ENCODE measurements at regions of chr1 and their contacts with region 1.

Region 1: GRCh38 chr1:193406901-193407300 is 220.5 kb upstream of the B3GALT2 start:
- DNase-seq: peak in 6 of 9 donors; percentile 30 to 54 (median 48)
- ATAC-seq: peak; percentile 70
- H3K4me3 ChIP-seq: no peak overlapping the region
- H3K4me3 Mint-ChIP-seq: peak overlapping the region in 3 of 10 donors; percentile 3 to 11 (median 5)
- H3K27ac ChIP-seq: no peak overlapping the region
- H3K27ac Mint-ChIP-seq: peak overlapping the region in 5 of 9 donors; percentile 0 to 68 (median 10)
- H3K4me1 ChIP-seq: peaks cover 4 to 11% of the 10 kb centered on the region in 2 donors
- H3K4me1 Mint-ChIP-seq: peaks cover 11 to 34% (median 24%) of the 10 kb centered on the region in 7 donors
- H3K27me3 ChIP-seq: no peaks in the 10 kb centered on the region
- H3K27me3 Mint-ChIP-seq: no peaks in the 10 kb centered on the region

Region 2: GRCh38 chr1:193183019-193183627 is 223.8 kb before region 1 on chr1:
- CTCF ChIA-PET with region 1: interaction called, 3 read pairs
- POLR2A ChIA-PET with region 1: no interaction called
- intact Hi-C with region 1: loop called (anchors 5 kb)
- DNase-seq: peak in 7 of 9 donors; percentile 21 to 62 (median 56)
- ATAC-seq: peak; percentile 85
- H3K4me3 ChIP-seq: no peak overlapping the region
- H3K4me3 Mint-ChIP-seq: no peak overlapping the region
- H3K27ac ChIP-seq: no peak overlapping the region
- H3K27ac Mint-ChIP-seq: no peak overlapping the region
- H3K4me1 ChIP-seq: peaks cover 0 to 8% of the 10 kb centered on the region in 2 donors
- H3K4me1 Mint-ChIP-seq: peaks cover 24 to 77% (median 58%) of the 10 kb centered on the region in 7 donors
- H3K27me3 ChIP-seq: no peaks in the 10 kb centered on the region
- H3K27me3 Mint-ChIP-seq: no peaks in the 10 kb centered on the region

Region 3: DNA sequence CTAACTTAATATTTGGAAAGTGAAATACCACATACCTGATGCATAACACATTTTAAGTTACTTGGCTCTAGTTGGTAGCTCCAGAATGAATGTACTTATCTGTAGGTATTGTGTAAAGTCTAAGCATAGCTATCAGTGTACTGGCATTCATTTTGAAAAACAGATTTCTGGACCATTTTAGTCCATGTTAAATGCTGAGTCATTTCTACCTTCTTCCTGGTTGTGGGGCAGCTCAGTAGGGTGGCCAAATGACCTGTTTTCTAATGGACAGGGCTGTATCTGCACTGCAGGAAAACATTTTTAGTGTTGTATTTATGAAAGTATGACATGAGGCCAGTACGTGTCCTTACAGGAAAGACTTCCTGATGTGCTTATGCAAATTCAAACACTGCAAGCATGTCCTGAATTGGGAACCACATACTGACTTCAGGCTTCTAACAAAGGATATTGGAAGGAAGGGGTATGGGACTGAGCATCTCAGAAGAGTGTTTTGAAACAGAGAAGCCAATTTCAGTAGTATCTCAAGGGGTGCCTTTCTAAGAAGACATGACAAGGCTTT is 79.8 kb after region 1 on chr1:
- CTCF ChIA-PET with region 1: no interaction called
- POLR2A ChIA-PET with region 1: no interaction called
- intact Hi-C with region 1: no loop called
- DNase-seq: no peak
- ATAC-seq: no peak
- H3K4me3 ChIP-seq: no peak overlapping the region
- H3K4me3 Mint-ChIP-seq: peak overlapping the region in 1 of 10 donors; percentile 47
- H3K27ac ChIP-seq: no peak overlapping the region
- H3K27ac Mint-ChIP-seq: peak overlapping the region in 7 of 9 donors; percentile 4 to 84 (median 29)
- H3K4me1 ChIP-seq: peaks cover 0 to 9% of the 10 kb centered on the region in 2 donors
- H3K4me1 Mint-ChIP-seq: peaks cover 5 to 35% (median 22%) of the 10 kb centered on the region in 7 donors
- H3K27me3 ChIP-seq: no peaks in the 10 kb centered on the region
- H3K27me3 Mint-ChIP-seq: no peaks in the 10 kb centered on the region

Region 4: GRCh38 chr1:193629875-193630274 is 223.0 kb after region 1 on chr1:
- CTCF ChIA-PET with region 1: no interaction called
- POLR2A ChIA-PET with region 1: no interaction called
- intact Hi-C with region 1: loop called in 1 of 2 experiments (anchors 5 kb)
- DNase-seq: no peak
- ATAC-seq: no peak
- H3K4me3 ChIP-seq: no peak overlapping the region
- H3K4me3 Mint-ChIP-seq: no peak overlapping the region
- H3K27ac ChIP-seq: no peak overlapping the region
- H3K27ac Mint-ChIP-seq: no peak overlapping the region
- H3K4me1 ChIP-seq: no peaks in the 10 kb centered on the region
- H3K4me1 Mint-ChIP-seq: peaks cover 5 to 14% (median 10%) of the 10 kb centered on the region in 7 donors
- H3K27me3 ChIP-seq: no peaks in the 10 kb centered on the region
- H3K27me3 Mint-ChIP-seq: peaks cover 0 to 9% (median 0%) of the 10 kb centered on the region in 5 donors

Region 5: DNA sequence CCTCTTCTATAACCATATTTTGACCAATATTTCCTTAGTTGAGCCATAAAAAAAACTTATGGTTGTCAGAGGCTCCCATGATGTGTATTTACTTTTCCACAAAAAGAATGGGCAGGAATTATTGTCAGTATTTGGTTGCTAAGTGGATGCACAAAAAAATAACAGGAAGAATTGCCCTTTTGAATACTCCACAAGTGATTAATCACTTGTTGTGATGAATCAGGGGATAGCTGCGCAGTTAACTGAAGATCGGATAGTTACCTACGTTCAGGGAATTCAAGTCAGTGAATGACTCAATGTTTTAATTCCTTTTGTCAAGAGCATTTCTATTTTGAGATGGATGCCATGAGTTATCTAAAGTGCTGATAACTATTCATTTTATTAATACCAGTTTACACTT is 564.7 kb after region 1 on chr1:
- CTCF ChIA-PET with region 1: no interaction called
- POLR2A ChIA-PET with region 1: no interaction called
- intact Hi-C with region 1: loop called in 1 of 2 experiments (anchors 5 kb)
- DNase-seq: no peak
- ATAC-seq: no peak
- H3K4me3 ChIP-seq: no peak overlapping the region
- H3K4me3 Mint-ChIP-seq: no peak overlapping the region
- H3K27ac ChIP-seq: no peak overlapping the region
- H3K27ac Mint-ChIP-seq: no peak overlapping the region
- H3K4me1 ChIP-seq: no peaks in the 10 kb centered on the region
- H3K4me1 Mint-ChIP-seq: peaks cover 0 to 9% (median 0%) of the 10 kb centered on the region in 7 donors
- H3K27me3 ChIP-seq: no peaks in the 10 kb centered on the region
- H3K27me3 Mint-ChIP-seq: no peaks in the 10 kb centered on the region

Region 6: DNA sequence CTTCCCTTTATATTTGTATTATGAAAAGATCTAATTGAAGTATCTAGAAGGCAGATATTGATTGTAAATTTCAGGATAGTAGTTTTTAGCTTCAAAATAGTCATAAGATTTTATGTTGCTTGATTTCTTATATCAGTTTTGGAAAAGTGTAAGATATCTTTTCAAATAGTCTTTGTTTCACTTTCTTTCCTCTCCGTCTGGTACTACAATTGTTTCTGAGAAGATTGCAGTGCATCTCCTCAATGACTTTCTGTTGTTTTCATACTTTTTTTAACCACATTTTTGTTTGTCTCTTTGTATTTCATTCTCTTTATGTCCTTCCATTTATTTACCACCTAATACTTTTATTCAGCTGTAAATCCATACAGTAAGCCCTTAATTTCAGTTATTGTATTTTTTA is 744.2 kb after region 1 on chr1:
- CTCF ChIA-PET with region 1: no interaction called
- POLR2A ChIA-PET with region 1: no interaction called
- intact Hi-C with region 1: loop called in 1 of 2 experiments (anchors 5 kb)
- DNase-seq: no peak
- ATAC-seq: no peak
- H3K4me3 ChIP-seq: peak overlapping the region; percentile 30
- H3K4me3 Mint-ChIP-seq: peak overlapping the region in 9 of 10 donors; percentile 68 to 89 (median 77)
- H3K27ac ChIP-seq: no peak overlapping the region
- H3K27ac Mint-ChIP-seq: peak overlapping the region in 8 of 9 donors; percentile 5 to 89 (median 63)
- H3K4me1 ChIP-seq: peaks cover 0 to 4% of the 10 kb centered on the region in 2 donors
- H3K4me1 Mint-ChIP-seq: peaks cover 2 to 22% (median 17%) of the 10 kb centered on the region in 7 donors
- H3K27me3 ChIP-seq: no peaks in the 10 kb centered on the region
- H3K27me3 Mint-ChIP-seq: no peaks in the 10 kb centered on the region